ENCODE measurements at regions of chr1 and their contacts with region 1.

Region 1: DNA sequence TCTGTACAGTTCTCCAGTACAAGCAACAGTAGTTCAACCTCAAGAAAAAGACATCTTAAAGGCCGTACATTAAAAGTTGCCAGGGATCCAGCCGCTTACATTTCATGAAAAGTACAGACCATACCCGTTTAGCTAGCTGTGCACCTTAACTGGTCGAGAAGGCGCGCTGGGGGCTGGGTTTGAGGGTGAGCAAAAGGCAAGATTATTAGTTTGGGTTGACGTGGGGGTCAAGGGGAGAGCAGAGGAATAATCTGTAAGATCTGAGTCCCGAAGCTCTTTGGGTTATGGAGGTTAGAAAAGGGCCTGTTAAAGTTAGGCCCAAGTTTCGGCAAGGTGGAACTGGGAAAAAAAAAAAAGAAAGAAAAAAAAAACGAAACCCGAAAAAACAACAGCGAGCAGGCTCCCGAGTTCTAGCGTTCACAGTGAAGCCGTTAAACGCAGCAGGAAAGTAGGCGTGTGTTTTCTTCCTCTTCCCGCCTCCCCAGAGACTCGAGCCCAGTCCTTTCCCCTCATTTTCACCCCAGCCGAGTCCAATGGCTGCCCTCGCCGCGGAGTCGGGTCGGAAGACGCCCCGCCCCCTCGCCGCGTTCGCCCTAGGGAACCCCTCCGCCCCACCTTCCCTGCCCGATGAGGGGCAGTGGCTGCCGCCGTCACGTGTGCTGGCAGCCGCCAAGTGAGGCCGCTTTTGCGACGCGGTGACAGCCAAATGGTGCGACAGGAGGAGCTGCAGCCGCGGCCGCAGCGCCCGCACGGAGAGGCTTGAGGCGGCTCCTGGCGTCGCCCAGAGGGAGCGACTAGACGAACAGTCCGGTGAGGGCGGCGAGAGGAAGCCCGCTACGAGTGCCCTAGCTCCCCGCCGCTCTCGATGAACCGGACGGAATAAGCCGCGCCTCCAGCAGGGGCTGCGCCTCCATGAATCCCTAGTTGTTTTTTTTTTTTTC is at the start of gene PKN2:
- DNase-seq: peak; percentile 97
- H3K4me3 Mint-ChIP-seq: peak within 1 kb of the TSS; percentile 100
- H3K27ac Mint-ChIP-seq: peak within 1 kb of the TSS; percentile 100
- H3K4me1 Mint-ChIP-seq: peaks cover 35% of the 10 kb centered on the region
- H3K27me3 Mint-ChIP-seq: peaks cover 5% of the 10 kb centered on the region
- total RNA-seq, gene PKN2: 23.8 and 26.0 TPM in 2 replicates

Region 2: GRCh38 chr1:88509366-88509765 is 174.4 kb before region 1 on chr1:
- intact Hi-C with region 1: no loop called
- DNase-seq: no peak
- H3K4me3 Mint-ChIP-seq: no peak overlapping the region
- H3K27ac Mint-ChIP-seq: no peak overlapping the region
- H3K4me1 Mint-ChIP-seq: no peaks in the 10 kb centered on the region
- H3K27me3 Mint-ChIP-seq: peaks cover 4% of the 10 kb centered on the region

Region 3: GRCh38 chr1:88655685-88656299 is 28.0 kb before region 1 on chr1:
- intact Hi-C with region 1: loop called (anchors 2 kb)
- DNase-seq: no peak
- H3K4me3 Mint-ChIP-seq: no peak overlapping the region
- H3K27ac Mint-ChIP-seq: no peak overlapping the region
- H3K4me1 Mint-ChIP-seq: peaks cover 15% of the 10 kb centered on the region
- H3K27me3 Mint-ChIP-seq: peaks cover 1% of the 10 kb centered on the region

Region 4: DNA sequence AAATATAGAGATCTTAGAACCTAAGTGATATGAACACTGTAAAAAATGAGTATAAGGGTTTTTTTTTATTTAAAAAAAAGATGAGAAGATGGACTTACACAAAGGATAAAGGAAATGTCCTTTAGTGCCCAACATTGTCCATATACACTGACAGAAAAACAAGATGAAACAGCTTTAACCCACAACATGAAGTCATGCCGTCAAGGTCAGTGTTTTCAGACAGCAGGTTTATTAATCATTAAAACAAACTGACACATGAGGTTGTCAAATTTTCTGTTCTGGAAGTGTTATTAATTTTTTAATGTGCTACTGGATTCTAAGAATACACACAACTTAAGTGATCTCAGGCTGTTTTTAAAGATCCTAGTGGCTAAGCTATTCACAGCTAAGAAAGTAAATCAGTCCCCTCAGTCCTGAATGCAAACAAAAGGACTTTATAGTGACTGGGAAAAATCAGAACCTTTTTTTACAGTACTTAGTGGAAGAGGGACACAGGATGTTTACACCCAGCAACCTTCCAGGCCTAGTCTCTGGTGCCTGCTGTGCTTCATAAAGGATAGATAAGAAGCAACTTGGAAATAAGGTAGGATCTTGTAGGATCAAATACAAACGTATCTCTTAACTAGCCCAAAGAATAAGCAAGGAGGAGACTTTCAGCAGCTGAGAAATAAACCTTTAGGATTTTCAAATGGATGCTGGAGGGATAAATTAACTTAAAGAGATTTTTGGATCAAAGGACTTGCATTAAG is 21.7 kb before region 1 on chr1:
- intact Hi-C with region 1: loop called (anchors 1 kb)
- DNase-seq: no peak
- H3K4me3 Mint-ChIP-seq: no peak overlapping the region
- H3K27ac Mint-ChIP-seq: no peak overlapping the region
- H3K4me1 Mint-ChIP-seq: peaks cover 30% of the 10 kb centered on the region
- H3K27me3 Mint-ChIP-seq: peaks cover 6% of the 10 kb centered on the region

Region 5: DNA sequence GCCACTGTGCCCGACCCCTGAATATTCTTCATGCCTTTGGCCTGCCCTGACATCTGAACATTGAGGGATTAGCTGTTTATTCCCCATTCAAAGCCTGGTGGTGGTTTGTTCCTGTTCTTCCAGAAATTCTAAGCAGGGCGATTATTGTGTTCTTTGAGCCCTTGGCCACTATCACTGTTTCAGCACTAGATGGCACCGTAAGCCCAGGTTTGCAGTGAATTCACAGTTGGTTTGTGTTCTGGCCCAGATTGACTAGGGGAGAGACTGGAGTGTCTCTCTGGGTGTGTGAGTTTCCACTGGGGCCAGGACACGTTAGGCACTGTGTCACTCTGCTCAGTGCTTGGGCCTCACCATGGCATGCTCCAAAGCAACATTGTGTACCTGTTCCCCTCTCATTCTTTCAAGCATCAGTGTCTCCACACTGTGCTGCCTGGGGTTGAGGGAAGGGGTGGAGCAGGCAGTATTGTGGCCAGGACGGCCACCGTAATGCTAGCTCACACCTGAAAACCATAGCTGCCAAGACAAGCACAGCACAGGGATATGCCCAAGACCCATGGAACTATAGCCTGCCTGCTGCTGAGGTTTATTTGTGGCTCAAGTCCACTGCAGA is 52.9 kb after region 1 on chr1:
- intact Hi-C with region 1: loop called (anchors 5 kb)
- DNase-seq: peak; percentile 16
- H3K4me3 Mint-ChIP-seq: no peak overlapping the region
- H3K27ac Mint-ChIP-seq: no peak overlapping the region
- H3K4me1 Mint-ChIP-seq: peaks cover 17% of the 10 kb centered on the region
- H3K27me3 Mint-ChIP-seq: no peaks in the 10 kb centered on the region

Region 6: GRCh38 chr1:88851303-88852063 is 167.7 kb after region 1 on chr1:
- intact Hi-C with region 1: no loop called
- DNase-seq: no peak
- H3K4me3 Mint-ChIP-seq: no peak overlapping the region
- H3K27ac Mint-ChIP-seq: no peak overlapping the region
- H3K4me1 Mint-ChIP-seq: no peaks in the 10 kb centered on the region
- H3K27me3 Mint-ChIP-seq: no peaks in the 10 kb centered on the region

Region 7: GRCh38 chr1:88867743-88868521 is 184.1 kb after region 1 on chr1:
- intact Hi-C with region 1: loop called (anchors 1 kb)
- DNase-seq: no peak
- H3K4me3 Mint-ChIP-seq: peak overlapping the region; percentile 60
- H3K27ac Mint-ChIP-seq: peak overlapping the region; percentile 87
- H3K4me1 Mint-ChIP-seq: peaks cover 35% of the 10 kb centered on the region
- H3K27me3 Mint-ChIP-seq: no peaks in the 10 kb centered on the region

Region 8: GRCh38 chr1:88891318-88891950 is 207.6 kb after region 1 on chr1 and contains the start of gene GTF2B:
- intact Hi-C with region 1: loop called (anchors 1 kb)
- DNase-seq: peak; percentile 92
- H3K4me3 Mint-ChIP-seq: peak within 1 kb of the TSS; percentile 92
- H3K27ac Mint-ChIP-seq: peak within 1 kb of the TSS; percentile 95
- H3K4me1 Mint-ChIP-seq: peaks cover 49% of the 10 kb centered on the region
- H3K27me3 Mint-ChIP-seq: no peaks in the 10 kb centered on the region
- total RNA-seq, gene GTF2B: 45.5 and 49.1 TPM in 2 replicates

Region 9: DNA sequence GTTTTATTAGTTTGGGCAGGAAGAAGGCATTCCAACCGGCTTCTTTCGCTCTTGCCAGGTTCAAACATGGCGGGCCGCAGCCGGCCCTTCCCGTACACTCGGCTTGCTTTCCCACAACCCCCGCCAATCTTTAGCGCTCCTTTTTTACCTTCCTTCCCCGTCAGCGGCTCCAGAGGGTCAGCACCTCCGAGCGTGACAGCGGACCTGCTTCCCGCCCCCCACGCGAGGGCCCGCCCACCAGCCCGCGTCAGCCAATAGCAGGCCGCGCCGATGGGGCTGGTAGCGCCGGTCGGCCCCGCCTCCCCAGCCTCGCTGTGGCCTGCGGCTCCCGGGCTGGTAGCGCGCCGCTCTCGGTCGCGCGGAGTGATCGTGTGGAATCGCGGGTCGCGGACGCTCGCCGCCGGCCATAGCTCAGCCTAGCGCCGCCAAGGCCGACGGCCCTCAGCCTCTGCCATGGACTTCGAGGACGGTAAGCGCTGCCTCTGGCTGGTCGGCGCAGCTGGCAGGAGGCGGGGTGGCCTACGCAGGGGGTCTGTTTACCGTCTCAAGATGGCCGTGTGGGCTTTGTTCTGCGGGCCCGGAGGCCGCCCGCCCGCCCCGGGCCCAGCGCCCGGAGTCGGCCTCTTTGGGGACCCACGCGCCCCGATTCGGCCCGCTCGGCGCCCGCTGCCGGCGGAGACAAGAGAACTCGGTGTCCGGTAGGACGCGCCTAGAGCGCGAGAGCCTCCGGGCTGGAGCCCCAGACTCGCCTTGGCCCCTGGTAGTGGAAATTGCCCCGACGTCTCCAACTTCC is 1311.2 kb after region 1 on chr1 and contains the start of gene ZNF326:
- intact Hi-C with region 1: loop called (anchors 5 kb)
- DNase-seq: peak; percentile 93
- H3K4me3 Mint-ChIP-seq: peak within 1 kb of the TSS; percentile 99
- H3K27ac Mint-ChIP-seq: peak within 1 kb of the TSS; percentile 97
- H3K4me1 Mint-ChIP-seq: peaks cover 46% of the 10 kb centered on the region
- H3K27me3 Mint-ChIP-seq: no peaks in the 10 kb centered on the region
- total RNA-seq, gene ZNF326: 37.3 and 39.1 TPM in 2 replicates

Measured in activated T-helper 1 cell treated with anti-CD3 and anti-CD28 coated beads, Interleukin-12 subunit alpha, Interleukin-12 subunit beta, Interleukin-2, Interleukin-4 antibody, amounts not matched to agents 30 ng/mL and 10 ng/mL and 1 ng/mL, durations not matched to agents 14 hours and 24 hours and 36 hours (primary cell).